RWPE1 (cell line): ENCODE measurements at regions of chr1 and their contacts with region 1.

Region 1: DNA sequence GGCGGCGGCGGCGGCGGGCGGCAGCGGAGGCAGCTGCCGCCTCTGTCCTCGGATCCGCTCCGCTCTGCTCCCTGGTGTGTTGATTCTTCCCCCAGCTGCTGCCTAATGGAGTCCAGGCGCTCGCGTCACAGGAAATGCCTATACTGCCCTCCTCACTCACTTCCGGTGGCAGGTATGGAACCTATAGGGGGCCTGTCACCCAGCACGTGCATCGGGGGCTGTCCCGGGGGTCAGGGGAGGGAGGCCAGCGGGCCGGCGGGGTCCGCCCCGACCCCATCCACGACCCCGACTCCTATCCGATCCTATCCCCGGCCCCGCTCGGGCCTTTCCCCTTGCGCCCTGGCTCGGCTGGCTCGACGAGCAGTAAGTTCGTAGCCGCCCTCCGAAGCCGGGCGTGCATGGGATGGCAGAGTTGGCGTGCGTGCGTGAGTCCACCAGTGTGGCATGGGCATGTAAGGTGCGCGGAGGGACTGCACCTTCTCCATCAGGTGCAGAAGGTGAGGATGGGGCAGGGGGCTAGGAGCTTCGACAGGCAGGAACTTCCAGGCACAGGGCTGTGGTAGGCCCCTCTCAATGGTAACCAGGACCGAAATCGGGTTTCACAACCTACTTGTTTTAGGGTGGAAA is at the start of gene WDR26:
- DNase-seq: peak; percentile 86
- H3K27ac ChIP-seq: peak within 1 kb of the TSS; percentile 88
- CTCF ChIP-seq: no peak

Region 2: GRCh38 chr1:224420106-224420505 is 14.7 kb before region 1 on chr1:
- CTCF ChIA-PET with region 1: no interaction called
- POLR2A ChIA-PET with region 1: no interaction called
- DNase-seq: no peak
- H3K27ac ChIP-seq: no peak overlapping the region
- CTCF ChIP-seq: no peak

Region 3: GRCh38 chr1:224447251-224447650 is 12.4 kb after region 1 on chr1:
- CTCF ChIA-PET with region 1: no interaction called
- POLR2A ChIA-PET with region 1: interaction called, 10 read pairs
- DNase-seq: no peak
- H3K27ac ChIP-seq: peak overlapping the region; percentile 74
- CTCF ChIP-seq: no peak

Region 4: DNA sequence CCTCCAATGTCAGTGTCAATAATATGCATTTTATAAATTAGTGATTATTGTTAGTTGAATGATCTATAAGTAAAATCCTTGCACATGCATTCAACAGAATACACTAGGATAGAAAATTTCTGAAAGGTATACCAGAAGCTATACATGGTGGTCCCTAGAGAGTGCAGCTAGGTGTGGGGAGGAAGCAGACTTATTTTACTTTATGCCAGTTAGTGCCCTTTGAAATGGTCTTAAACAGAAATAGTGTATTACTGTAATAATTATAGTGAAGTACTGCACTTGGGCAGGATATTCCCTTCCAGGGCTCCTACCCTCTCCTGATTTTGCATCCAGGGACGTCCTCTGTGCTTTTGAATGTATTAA is 23.0 kb after region 1 on chr1:
- CTCF ChIA-PET with region 1: interaction called, 10 read pairs
- POLR2A ChIA-PET with region 1: interaction called, 9 read pairs
- DNase-seq: no peak
- H3K27ac ChIP-seq: peak overlapping the region; percentile 20
- CTCF ChIP-seq: peak; percentile 36; the same call in 1 of the 2 replicates

Region 5: GRCh38 chr1:224488806-224489499 is 54.1 kb after region 1 on chr1:
- CTCF ChIA-PET with region 1: no interaction called
- POLR2A ChIA-PET with region 1: no interaction called
- DNase-seq: no peak
- H3K27ac ChIP-seq: no peak overlapping the region
- CTCF ChIP-seq: no peak